ENCODE measurements at regions of chr12 and their contacts with region 1.

Region 1: DNA sequence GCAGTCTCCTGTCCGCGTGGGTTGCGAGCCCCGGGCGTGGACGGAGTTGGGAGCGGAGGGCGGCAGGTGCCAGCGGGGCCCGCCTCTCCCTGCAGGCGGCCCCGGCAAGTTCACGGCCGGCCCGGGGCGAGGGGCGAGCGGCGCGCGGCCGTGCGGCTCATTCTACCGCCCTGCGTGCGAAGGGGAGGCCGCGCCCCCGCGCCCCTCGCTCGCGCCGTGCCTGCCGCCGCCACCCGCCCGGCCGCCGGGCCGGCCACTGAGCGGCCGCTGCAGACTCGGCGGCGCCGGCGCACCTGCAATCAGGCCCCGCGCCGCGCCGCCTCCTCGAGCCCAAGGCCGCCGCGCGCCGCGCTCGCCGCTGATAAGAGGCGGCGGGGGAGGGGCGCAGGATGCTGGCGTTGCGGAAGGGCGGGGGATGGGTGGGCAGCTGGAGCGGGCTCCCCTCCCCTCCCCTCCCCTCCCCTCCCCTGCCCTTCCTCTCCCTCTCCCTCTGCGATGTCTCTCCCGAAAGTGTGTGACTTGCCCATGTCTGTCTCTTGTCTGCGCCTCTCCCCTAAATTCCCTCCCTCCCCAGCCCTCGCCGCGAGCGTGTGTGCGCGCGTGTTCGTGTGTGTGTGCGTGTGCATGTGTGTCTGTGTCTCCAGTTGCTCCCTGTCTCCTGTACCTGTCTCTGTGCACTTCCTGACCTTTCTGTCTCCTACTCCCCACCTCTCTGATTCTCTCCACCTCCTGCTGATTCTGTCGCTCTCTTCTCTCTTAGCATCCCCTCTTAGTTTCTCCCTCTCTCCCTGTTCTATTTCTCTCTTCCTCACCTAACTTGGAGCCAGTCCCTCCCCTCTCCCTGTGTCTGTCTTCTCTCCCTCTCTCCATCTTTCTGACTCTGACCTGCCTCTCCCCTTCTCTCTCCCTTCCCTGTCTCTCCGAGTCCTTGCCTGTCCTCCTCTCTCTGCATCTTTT is 768.1 kb upstream of the TBX3 start:
- DNase-seq: peak; percentile 63 to 67
- ATAC-seq: peak; percentile 66 to 85 (median 74)
- H3K4me3 ChIP-seq: peak overlapping the region in 9 of 10 donors; percentile 24 to 53 (median 39)
- H3K27ac ChIP-seq: peak overlapping the region in 7 of 10 donors; percentile 51 to 81 (median 72)
- H3K4me1 ChIP-seq: peaks cover 0 to 24% (median 4%) of the 10 kb centered on the region in 9 donors
- H3K27me3 ChIP-seq: peaks cover 0 to 29% (median 0%) of the 10 kb centered on the region in 7 donors
- CTCF ChIP-seq: no peak

Region 2: GRCh38 chr12:115440438-115440837 is 11.6 kb before region 1 on chr12:
- intact Hi-C with region 1: loop called in 1 of 10 experiments (anchors 1 kb)
- DNase-seq: peak; percentile 64 to 65
- ATAC-seq: peak; percentile 25 to 74 (median 55)
- H3K4me3 ChIP-seq: no peak overlapping the region
- H3K27ac ChIP-seq: peak overlapping the region in 6 of 10 donors; percentile 50 to 78 (median 61)
- H3K4me1 ChIP-seq: peaks cover 0 to 47% (median 8%) of the 10 kb centered on the region in 9 donors
- H3K27me3 ChIP-seq: peaks cover 0 to 5% (median 0%) of the 10 kb centered on the region in 7 donors
- CTCF ChIP-seq: no peak

Region 3: DNA sequence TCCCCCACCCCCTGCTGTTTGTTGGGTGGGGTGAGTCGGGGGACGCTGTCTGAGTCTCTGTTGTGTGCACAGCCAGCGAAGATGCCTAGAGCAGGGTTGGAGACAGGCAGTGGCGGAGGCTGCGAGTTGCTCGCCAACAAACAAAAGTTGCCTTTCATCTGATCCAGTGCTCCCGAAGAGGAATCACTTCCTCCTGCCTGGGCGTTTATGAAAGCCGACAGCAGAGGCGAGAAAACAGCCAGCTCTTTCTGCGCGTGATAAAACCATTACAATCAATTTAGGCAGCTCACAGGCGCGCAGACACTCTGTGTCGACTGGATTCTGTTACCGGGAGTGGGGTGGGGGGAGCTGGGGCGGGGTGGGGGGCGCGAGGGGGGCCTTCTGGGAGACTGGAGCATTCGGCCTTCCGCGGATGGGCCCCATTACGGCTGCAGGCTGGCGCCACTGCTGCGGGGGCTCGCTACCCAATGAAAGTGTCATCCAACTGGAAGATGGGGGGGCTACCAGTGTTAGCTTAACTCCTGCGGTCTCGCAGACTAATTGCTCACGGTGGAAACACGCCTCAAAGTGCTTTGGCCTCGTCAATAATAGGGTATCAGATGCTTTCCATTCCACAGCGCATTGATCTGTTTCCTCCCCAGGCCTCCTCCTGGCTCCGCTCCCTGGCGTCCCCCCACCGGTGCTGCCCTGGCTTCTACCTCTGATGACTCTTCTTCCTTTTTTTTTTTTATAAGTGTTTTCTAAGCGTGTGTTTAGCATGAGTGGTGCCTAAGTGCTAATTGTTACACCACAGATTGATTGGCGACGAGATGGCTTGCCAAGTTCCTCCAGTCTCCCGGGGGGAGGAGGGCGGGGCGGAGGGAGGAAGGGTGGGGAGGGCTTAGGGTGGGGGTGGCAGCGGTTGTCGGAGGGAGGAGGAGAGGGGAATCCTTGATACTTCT is 147.1 kb after region 1 on chr12:
- intact Hi-C with region 1: loop called in 3 of 10 experiments (anchors 5 to 10 kb)
- DNase-seq: peak; percentile 44 to 54
- ATAC-seq: peak; percentile 62 to 88 (median 86)
- H3K4me3 ChIP-seq: peak overlapping the region in 5 of 10 donors; percentile 3 to 29 (median 19)
- H3K27ac ChIP-seq: peak overlapping the region in 8 of 10 donors; percentile 19 to 75 (median 54)
- H3K4me1 ChIP-seq: peaks cover 0 to 25% (median 10%) of the 10 kb centered on the region in 9 donors
- H3K27me3 ChIP-seq: peaks cover 0 to 71% (median 31%) of the 10 kb centered on the region in 7 donors
- CTCF ChIP-seq: no peak